Natural killer cell (primary cell): ENCODE measurements at regions of chr1 and their contacts with region 1.

Region 1: GRCh38 chr1:39258146-39258924 is 53.8 kb downstream of the MACF1 start:
- DNase-seq: peak; percentile 60 to 85
- ATAC-seq: peak; percentile 72 to 86 (median 77)
- H3K4me3 ChIP-seq: no peak overlapping the region
- H3K4me3 Mint-ChIP-seq: no peak overlapping the region
- H3K27ac ChIP-seq: no peak overlapping the region
- H3K27ac Mint-ChIP-seq: peak overlapping the region; percentile 51 to 71
- H3K4me1 ChIP-seq: peaks cover 8% of the 10 kb centered on the region
- H3K4me1 Mint-ChIP-seq: peaks cover 25 to 34% of the 10 kb centered on the region in 2 donors
- H3K27me3 ChIP-seq: no peaks in the 10 kb centered on the region
- H3K27me3 Mint-ChIP-seq: no peaks in the 10 kb centered on the region
- CTCF ChIP-seq: peak; percentile 85

Region 2: GRCh38 chr1:39098546-39099250 is 159.6 kb before region 1 on chr1:
- intact Hi-C with region 1: loop called (anchors 2 kb)
- DNase-seq: peak in 1 of 2 donors; percentile 87
- ATAC-seq: peak; percentile 76 to 88 (median 83)
- H3K4me3 ChIP-seq: no peak overlapping the region
- H3K4me3 Mint-ChIP-seq: no peak overlapping the region
- H3K27ac ChIP-seq: no peak overlapping the region
- H3K27ac Mint-ChIP-seq: no peak overlapping the region
- H3K4me1 ChIP-seq: peaks cover 6% of the 10 kb centered on the region
- H3K4me1 Mint-ChIP-seq: peaks cover 10 to 15% of the 10 kb centered on the region in 2 donors
- H3K27me3 ChIP-seq: no peaks in the 10 kb centered on the region
- H3K27me3 Mint-ChIP-seq: peaks cover 0 to 10% of the 10 kb centered on the region in 2 donors
- CTCF ChIP-seq: peak; percentile 51

Region 3: GRCh38 chr1:39183503-39184353 is 74.6 kb before region 1 on chr1:
- intact Hi-C with region 1: loop called (anchors 2 kb)
- DNase-seq: peak; percentile 53 to 92
- ATAC-seq: peak; percentile 89 to 92 (median 92)
- H3K4me3 ChIP-seq: no peak overlapping the region
- H3K4me3 Mint-ChIP-seq: no peak overlapping the region
- H3K27ac ChIP-seq: peak overlapping the region; percentile 23
- H3K27ac Mint-ChIP-seq: peak overlapping the region; percentile 58 to 90
- H3K4me1 ChIP-seq: peaks cover 9% of the 10 kb centered on the region
- H3K4me1 Mint-ChIP-seq: peaks cover 14% of the 10 kb centered on the region in 2 donors
- H3K27me3 ChIP-seq: no peaks in the 10 kb centered on the region
- H3K27me3 Mint-ChIP-seq: no peaks in the 10 kb centered on the region
- CTCF ChIP-seq: peak; percentile 63

Region 4: GRCh38 chr1:39196244-39197215 is 61.8 kb before region 1 on chr1:
- intact Hi-C with region 1: loop called (anchors 1 kb)
- DNase-seq: peak; percentile 37 to 87
- ATAC-seq: peak; percentile 64 to 91 (median 86)
- H3K4me3 ChIP-seq: no peak overlapping the region
- H3K4me3 Mint-ChIP-seq: peak overlapping the region; percentile 74
- H3K27ac ChIP-seq: peak overlapping the region; percentile 86
- H3K27ac Mint-ChIP-seq: peak overlapping the region; percentile 91 to 94
- H3K4me1 ChIP-seq: peaks cover 58% of the 10 kb centered on the region
- H3K4me1 Mint-ChIP-seq: peaks cover 61 to 71% of the 10 kb centered on the region in 2 donors
- H3K27me3 ChIP-seq: no peaks in the 10 kb centered on the region
- H3K27me3 Mint-ChIP-seq: no peaks in the 10 kb centered on the region
- CTCF ChIP-seq: no peak

Region 5: GRCh38 chr1:40901886-40902852 is 1643.8 kb after region 1 on chr1:
- intact Hi-C with region 1: no loop called
- DNase-seq: no peak
- ATAC-seq: no peak
- H3K4me3 ChIP-seq: no peak overlapping the region
- H3K4me3 Mint-ChIP-seq: no peak overlapping the region
- H3K27ac ChIP-seq: no peak overlapping the region
- H3K27ac Mint-ChIP-seq: no peak overlapping the region
- H3K4me1 ChIP-seq: no peaks in the 10 kb centered on the region
- H3K4me1 Mint-ChIP-seq: no peaks in the 10 kb centered on the region
- H3K27me3 ChIP-seq: no peaks in the 10 kb centered on the region
- H3K27me3 Mint-ChIP-seq: peaks cover 7% of the 10 kb centered on the region in 2 donors
- CTCF ChIP-seq: no peak